A549 (cell line): ENCODE measurements at regions of chr3 and their contacts with region 1.

Region 1: GRCh38 chr3:50550079-50550741 is 17.3 kb downstream of the C3orf18 start:
- DNase-seq: peak; percentile 32 to 52
- ATAC-seq: peak; percentile 63 to 86; a peak in 3 of 6 replicates
- H3K4me3 ChIP-seq: no peak overlapping the region
- H3K27ac ChIP-seq: no peak overlapping the region
- H3K4me1 ChIP-seq: no peaks in the 10 kb centered on the region
- CTCF ChIP-seq: peak; percentile 63
- EP300 ChIP-seq: no peak
- POLR2A ChIP-seq: no peak
- RAD21 ChIP-seq: peak; percentile 60 to 63

Region 2: GRCh38 chr3:50525987-50526386 is 24.2 kb before region 1 on chr3:
- CTCF ChIA-PET with region 1: interaction called, 12 read pairs
- POLR2A ChIA-PET with region 1: no interaction called
- DNase-seq: peak; percentile 19 to 40
- ATAC-seq: peak; percentile 63 to 72; a peak in 4 of 6 replicates
- H3K4me3 ChIP-seq: no peak overlapping the region
- H3K27ac ChIP-seq: no peak overlapping the region
- H3K4me1 ChIP-seq: no peaks in the 10 kb centered on the region
- CTCF ChIP-seq: no peak
- EP300 ChIP-seq: no peak
- POLR2A ChIP-seq: no peak
- RAD21 ChIP-seq: no peak